ENCODE measurements at regions of chr4 and their contacts with region 1.

Region 1: DNA sequence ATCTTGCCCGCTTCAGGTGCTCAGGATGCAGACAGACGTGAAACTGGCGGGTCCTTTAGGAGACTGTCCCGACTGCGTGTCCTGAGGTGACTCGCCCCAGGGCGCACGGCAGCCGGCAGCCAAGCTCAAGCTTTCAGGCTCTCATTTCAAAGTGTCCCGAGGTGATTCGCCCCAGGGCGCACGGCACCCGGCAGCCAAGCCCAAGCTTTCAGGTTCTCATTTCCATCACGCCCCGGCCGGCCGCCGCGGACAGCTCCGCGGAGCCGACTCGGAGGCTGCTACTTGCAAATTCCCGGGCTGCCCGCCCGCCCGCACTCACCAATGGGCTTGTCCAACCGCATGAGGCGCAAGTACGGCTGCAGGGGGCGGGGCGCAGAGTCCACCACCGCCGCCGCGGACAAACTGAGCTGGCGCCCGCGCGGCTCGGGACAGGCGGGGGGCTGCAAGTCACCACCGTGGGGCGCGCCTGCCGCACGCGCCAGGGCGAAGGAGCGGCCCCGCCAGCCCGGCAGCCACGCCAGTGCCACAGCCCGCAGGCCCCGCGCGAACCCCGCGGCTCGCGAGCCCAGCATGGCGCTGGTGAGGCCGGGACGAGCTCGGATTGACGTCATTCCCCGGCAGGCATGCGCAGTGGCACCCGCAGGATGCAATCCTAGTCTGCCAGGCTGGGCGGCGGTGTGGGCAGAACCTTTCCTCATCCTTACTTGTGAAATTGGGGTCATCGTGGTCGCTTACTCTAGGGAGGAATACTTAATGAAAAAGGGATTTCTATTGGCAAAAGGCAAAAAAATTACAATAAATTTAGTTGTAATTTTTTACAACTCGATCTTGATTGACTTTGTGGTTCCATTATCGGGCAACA is at the start of gene COQ2:
- DNase-seq: peak; percentile 90 to 93 (median 91)
- H3K4me3 ChIP-seq: peak within 1 kb of the TSS; percentile 84 to 90
- H3K4me3 Mint-ChIP-seq: peak within 1 kb of the TSS; percentile 94 to 99 (median 98)
- H3K27ac ChIP-seq: peak within 1 kb of the TSS; percentile 60
- H3K27ac Mint-ChIP-seq: peak within 1 kb of the TSS; percentile 93 to 99 (median 99)
- H3K4me1 ChIP-seq: peaks cover 24% of the 10 kb centered on the region
- H3K4me1 Mint-ChIP-seq: peaks cover 26 to 46% (median 32%) of the 10 kb centered on the region in 4 donors
- H3K27me3 ChIP-seq: no peaks in the 10 kb centered on the region
- H3K27me3 Mint-ChIP-seq: no peaks in the 10 kb centered on the region
- total RNA-seq, gene COQ2: 6.5 to 7.2 TPM

Region 2: GRCh38 chr4:81565142-81565870 is 1719.1 kb before region 1 on chr4:
- CTCF ChIA-PET with region 1: no interaction called
- POLR2A ChIA-PET with region 1: no interaction called
- intact Hi-C with region 1: no loop called
- DNase-seq: no peak
- H3K4me3 ChIP-seq: no peak overlapping the region
- H3K4me3 Mint-ChIP-seq: no peak overlapping the region
- H3K27ac ChIP-seq: no peak overlapping the region
- H3K27ac Mint-ChIP-seq: peak overlapping the region in 1 of 7 donors; percentile 66
- H3K4me1 ChIP-seq: peaks cover 12% of the 10 kb centered on the region
- H3K4me1 Mint-ChIP-seq: peaks cover 5 to 9% (median 7%) of the 10 kb centered on the region in 4 donors
- H3K27me3 ChIP-seq: no peaks in the 10 kb centered on the region
- H3K27me3 Mint-ChIP-seq: no peaks in the 10 kb centered on the region

Region 3: DNA sequence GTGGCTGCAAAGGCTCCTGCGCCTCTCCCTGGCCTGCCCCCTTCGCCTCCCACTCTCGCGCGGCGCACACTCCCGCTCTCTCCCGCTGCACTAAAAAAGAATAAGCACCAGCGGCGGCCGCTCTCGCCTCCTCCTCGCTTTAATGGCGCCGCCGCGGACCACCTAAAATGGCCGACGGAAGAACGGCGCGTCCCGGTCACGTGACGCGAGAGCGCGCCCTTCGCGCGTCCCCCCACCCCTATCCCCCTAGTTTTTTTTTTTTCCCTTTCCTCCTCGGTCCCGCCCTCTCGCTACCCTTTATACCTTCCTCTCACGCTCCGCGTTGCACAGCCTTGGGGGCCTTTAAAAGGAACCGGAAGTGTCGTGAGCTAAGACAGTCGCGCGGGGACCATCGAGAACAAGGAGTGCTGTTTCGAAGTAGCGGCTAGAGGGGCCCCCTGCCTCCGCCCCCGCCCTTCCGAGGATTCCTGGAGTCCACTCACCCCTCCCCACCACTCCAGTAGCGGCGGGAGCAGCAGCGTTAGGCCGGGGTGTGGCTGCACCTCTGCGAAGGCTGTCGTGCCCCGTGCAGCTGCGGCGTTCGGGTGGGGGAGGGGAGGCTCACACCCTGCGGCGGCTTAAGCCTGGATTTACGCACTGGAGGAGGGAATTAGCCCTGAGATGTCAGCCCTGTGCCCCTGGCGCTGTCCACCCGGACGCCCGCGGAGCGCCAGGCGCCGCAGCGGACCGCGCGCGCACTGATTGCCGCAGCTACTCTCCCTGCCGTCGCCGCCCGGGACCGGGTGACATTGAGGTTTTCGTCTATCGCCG is 910.4 kb before region 1 on chr4 and contains the start of gene HNRNPD:
- CTCF ChIA-PET with region 1: no interaction called
- POLR2A ChIA-PET with region 1: interaction called, 3 read pairs
- intact Hi-C with region 1: loop called (anchors 5 kb)
- DNase-seq: peak; percentile 91 to 96 (median 95)
- H3K4me3 ChIP-seq: peak within 1 kb of the TSS; percentile 95 to 96
- H3K4me3 Mint-ChIP-seq: peak within 1 kb of the TSS; percentile 96 to 100 (median 98)
- H3K27ac ChIP-seq: peak within 1 kb of the TSS; percentile 98
- H3K27ac Mint-ChIP-seq: peak within 1 kb of the TSS; percentile 98 to 100 (median 99)
- H3K4me1 ChIP-seq: peaks cover 53% of the 10 kb centered on the region
- H3K4me1 Mint-ChIP-seq: peaks cover 32 to 67% (median 48%) of the 10 kb centered on the region in 4 donors
- H3K27me3 ChIP-seq: no peaks in the 10 kb centered on the region
- H3K27me3 Mint-ChIP-seq: peaks cover 0 to 2% of the 10 kb centered on the region in 2 donors
- total RNA-seq, gene HNRNPD: 234 to 247 TPM

Region 4: DNA sequence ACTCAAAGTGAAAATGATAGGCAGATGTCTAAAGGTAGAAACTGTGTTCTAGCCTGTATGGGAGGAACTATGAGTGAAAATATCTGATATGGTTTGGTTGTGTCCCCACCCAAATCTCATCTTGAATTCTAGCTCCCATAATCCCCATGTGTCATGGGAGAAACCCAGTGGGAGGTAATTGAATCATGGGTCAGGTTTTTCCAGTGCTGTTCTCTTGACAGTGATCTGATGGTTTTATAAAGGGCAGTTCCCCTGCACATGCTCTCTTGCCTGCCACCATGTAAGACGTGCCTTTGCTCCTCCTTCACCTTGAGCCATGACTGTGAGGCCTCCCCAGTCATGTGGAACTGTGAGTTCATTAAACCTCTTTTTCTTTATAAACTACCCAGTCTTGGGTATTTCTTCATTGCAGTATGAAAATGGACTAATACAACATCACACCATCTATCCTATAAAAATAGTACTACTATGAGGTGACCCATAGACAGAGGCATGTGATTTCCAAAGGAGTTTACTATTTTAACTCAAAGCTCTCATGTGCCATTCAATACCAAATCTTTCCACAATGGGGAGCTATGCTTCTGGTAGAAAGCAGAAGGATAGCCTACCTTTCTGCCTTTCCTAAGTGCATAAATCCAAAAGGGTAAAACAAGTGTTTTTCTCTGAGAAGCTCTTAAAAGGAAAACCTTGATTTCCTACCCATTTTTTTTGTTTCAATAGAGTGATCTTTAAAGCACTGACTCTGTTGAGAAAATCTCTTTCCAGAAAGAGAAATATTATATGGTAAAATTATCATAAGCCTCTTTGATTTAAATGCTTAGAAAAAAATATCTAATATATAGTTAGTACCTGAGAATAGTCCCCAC is 432.3 kb before region 1 on chr4:
- CTCF ChIA-PET with region 1: interaction called, 5 read pairs
- POLR2A ChIA-PET with region 1: no interaction called
- intact Hi-C with region 1: loop called (anchors 2 kb)
- DNase-seq: peak in 4 of 5 donors; percentile 21 to 40 (median 30)
- H3K4me3 ChIP-seq: no peak overlapping the region
- H3K4me3 Mint-ChIP-seq: no peak overlapping the region
- H3K27ac ChIP-seq: no peak overlapping the region
- H3K27ac Mint-ChIP-seq: peak overlapping the region in 4 of 7 donors; percentile 60 to 75 (median 62)
- H3K4me1 ChIP-seq: no peaks in the 10 kb centered on the region
- H3K4me1 Mint-ChIP-seq: peaks cover 0 to 3% (median 0%) of the 10 kb centered on the region in 4 donors
- H3K27me3 ChIP-seq: no peaks in the 10 kb centered on the region
- H3K27me3 Mint-ChIP-seq: no peaks in the 10 kb centered on the region

Region 5: GRCh38 chr4:83012687-83013419 is 271.6 kb before region 1 on chr4:
- CTCF ChIA-PET with region 1: interaction called, 9 read pairs
- POLR2A ChIA-PET with region 1: interaction called, 9 read pairs
- intact Hi-C with region 1: loop called (anchors 1 kb)
- DNase-seq: peak; percentile 96 to 99 (median 97)
- H3K4me3 ChIP-seq: peak overlapping the region; percentile 88 to 98
- H3K4me3 Mint-ChIP-seq: peak overlapping the region; percentile 91 to 97 (median 95)
- H3K27ac ChIP-seq: peak overlapping the region; percentile 89
- H3K27ac Mint-ChIP-seq: peak overlapping the region; percentile 87 to 97 (median 94)
- H3K4me1 ChIP-seq: peaks cover 43% of the 10 kb centered on the region
- H3K4me1 Mint-ChIP-seq: peaks cover 33 to 52% (median 39%) of the 10 kb centered on the region in 4 donors
- H3K27me3 ChIP-seq: no peaks in the 10 kb centered on the region
- H3K27me3 Mint-ChIP-seq: no peaks in the 10 kb centered on the region

Region 6: GRCh38 chr4:83054928-83055327 is 229.5 kb before region 1 on chr4:
- CTCF ChIA-PET with region 1: interaction called, 14 read pairs
- POLR2A ChIA-PET with region 1: interaction called, 4 read pairs
- intact Hi-C with region 1: loop called (anchors 1 kb)
- DNase-seq: peak in 4 of 5 donors; percentile 13 to 25 (median 19)
- H3K4me3 ChIP-seq: no peak overlapping the region
- H3K4me3 Mint-ChIP-seq: no peak overlapping the region
- H3K27ac ChIP-seq: no peak overlapping the region
- H3K27ac Mint-ChIP-seq: no peak overlapping the region
- H3K4me1 ChIP-seq: no peaks in the 10 kb centered on the region
- H3K4me1 Mint-ChIP-seq: peaks cover 0 to 3% (median 0%) of the 10 kb centered on the region in 4 donors
- H3K27me3 ChIP-seq: no peaks in the 10 kb centered on the region
- H3K27me3 Mint-ChIP-seq: no peaks in the 10 kb centered on the region

Region 7: DNA sequence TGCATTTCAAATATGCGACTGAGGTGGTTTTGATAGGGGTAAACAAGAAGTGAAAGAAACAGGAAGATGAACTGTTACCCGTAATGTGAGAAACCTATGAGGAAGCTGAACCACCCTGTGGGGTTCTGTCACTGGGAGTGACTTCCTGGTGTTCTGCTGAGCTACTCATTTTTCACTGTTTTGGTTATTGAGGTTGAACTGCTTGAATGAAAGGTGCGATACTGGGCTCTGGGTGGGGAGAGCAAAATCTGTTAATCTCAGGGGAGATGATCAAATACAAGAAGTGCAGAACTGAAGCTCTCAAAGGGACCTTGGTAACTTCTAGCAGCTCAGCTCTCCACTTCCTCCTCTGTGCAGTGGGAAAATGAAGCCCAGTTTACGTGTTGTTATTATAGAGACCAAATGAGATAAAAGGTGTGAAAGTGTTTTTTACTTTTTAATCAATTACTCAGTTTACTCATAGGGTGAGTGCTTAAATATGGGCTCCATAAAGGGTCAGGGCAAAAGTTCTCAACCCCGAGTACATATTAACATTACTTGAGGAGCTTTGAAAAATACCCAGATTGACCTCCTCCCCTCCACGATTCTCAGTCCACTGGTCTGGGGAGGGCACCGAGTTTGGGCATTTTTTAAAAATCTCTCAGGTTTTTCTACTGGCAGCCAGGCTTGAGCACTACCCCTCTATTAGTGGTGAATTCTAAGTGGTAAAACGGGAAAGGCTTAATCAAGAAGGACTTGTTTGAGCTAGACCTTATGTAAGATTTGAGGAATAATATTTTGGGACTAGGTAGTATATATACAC is 66.5 kb before region 1 on chr4:
- CTCF ChIA-PET with region 1: interaction called, 6 read pairs
- POLR2A ChIA-PET with region 1: interaction called, 12 read pairs
- intact Hi-C with region 1: loop called (anchors 2 kb)
- DNase-seq: peak; percentile 82 to 91 (median 86)
- H3K4me3 ChIP-seq: peak overlapping the region in 1 of 2 donors; percentile 9
- H3K4me3 Mint-ChIP-seq: peak overlapping the region; percentile 55 to 77 (median 70)
- H3K27ac ChIP-seq: peak overlapping the region; percentile 64
- H3K27ac Mint-ChIP-seq: peak overlapping the region; percentile 77 to 94 (median 91)
- H3K4me1 ChIP-seq: peaks cover 85% of the 10 kb centered on the region
- H3K4me1 Mint-ChIP-seq: peaks cover 58 to 85% (median 71%) of the 10 kb centered on the region in 4 donors
- H3K27me3 ChIP-seq: no peaks in the 10 kb centered on the region
- H3K27me3 Mint-ChIP-seq: no peaks in the 10 kb centered on the region

Region 8: GRCh38 chr4:83267121-83267829 is 17.1 kb before region 1 on chr4:
- CTCF ChIA-PET with region 1: interaction called, 47 read pairs
- POLR2A ChIA-PET with region 1: interaction called, 10 read pairs
- intact Hi-C with region 1: no loop called
- DNase-seq: no peak
- H3K4me3 ChIP-seq: no peak overlapping the region
- H3K4me3 Mint-ChIP-seq: no peak overlapping the region
- H3K27ac ChIP-seq: no peak overlapping the region
- H3K27ac Mint-ChIP-seq: no peak overlapping the region
- H3K4me1 ChIP-seq: peaks cover 5% of the 10 kb centered on the region
- H3K4me1 Mint-ChIP-seq: peaks cover 0 to 16% (median 3%) of the 10 kb centered on the region in 4 donors
- H3K27me3 ChIP-seq: no peaks in the 10 kb centered on the region
- H3K27me3 Mint-ChIP-seq: no peaks in the 10 kb centered on the region

Measured in CD4-positive, alpha-beta memory T cell (primary cell).